MCF 10A (cell line): ENCODE measurements at regions of chr15 and their contacts with region 1.

Region 1: GRCh38 chr15:68875377-68876116 is 54.8 kb upstream of the SPESP1 start:
- DNase-seq: peak; percentile 93
- H3K4me3 Mint-ChIP-seq: peak overlapping the region; percentile 33
- H3K27ac Mint-ChIP-seq: no peak overlapping the region
- H3K4me1 Mint-ChIP-seq: no peaks in the 10 kb centered on the region
- H3K27me3 Mint-ChIP-seq: peaks cover 11% of the 10 kb centered on the region
- CTCF ChIP-seq: peak; percentile 85

Region 2: GRCh38 chr15:68304589-68305337 is 570.8 kb before region 1 on chr15:
- CTCF ChIA-PET with region 1: interaction called, 3 read pairs
- POLR2A ChIA-PET with region 1: no interaction called
- intact Hi-C with region 1: loop called (anchors 1 kb)
- DNase-seq: no peak
- H3K4me3 Mint-ChIP-seq: no peak overlapping the region
- H3K27ac Mint-ChIP-seq: peak overlapping the region; percentile 36
- H3K4me1 Mint-ChIP-seq: peaks cover 19% of the 10 kb centered on the region
- H3K27me3 Mint-ChIP-seq: no peaks in the 10 kb centered on the region
- CTCF ChIP-seq: no peak

Region 3: GRCh38 chr15:68559345-68560310 is 315.9 kb before region 1 on chr15:
- CTCF ChIA-PET with region 1: interaction called, 24 read pairs
- POLR2A ChIA-PET with region 1: interaction called, 4 read pairs
- intact Hi-C with region 1: loop called (anchors 1 kb)
- DNase-seq: peak; percentile 67
- H3K4me3 Mint-ChIP-seq: peak overlapping the region; percentile 70
- H3K27ac Mint-ChIP-seq: no peak overlapping the region
- H3K4me1 Mint-ChIP-seq: peaks cover 6% of the 10 kb centered on the region
- H3K27me3 Mint-ChIP-seq: no peaks in the 10 kb centered on the region
- CTCF ChIP-seq: peak; percentile 94

Region 4: GRCh38 chr15:68739390-68740080 is 136.0 kb before region 1 on chr15:
- CTCF ChIA-PET with region 1: interaction called, 18 read pairs
- POLR2A ChIA-PET with region 1: no interaction called
- intact Hi-C with region 1: no loop called
- DNase-seq: no peak
- H3K4me3 Mint-ChIP-seq: no peak overlapping the region
- H3K27ac Mint-ChIP-seq: no peak overlapping the region
- H3K4me1 Mint-ChIP-seq: no peaks in the 10 kb centered on the region
- H3K27me3 Mint-ChIP-seq: no peaks in the 10 kb centered on the region
- CTCF ChIP-seq: no peak

Region 5: DNA sequence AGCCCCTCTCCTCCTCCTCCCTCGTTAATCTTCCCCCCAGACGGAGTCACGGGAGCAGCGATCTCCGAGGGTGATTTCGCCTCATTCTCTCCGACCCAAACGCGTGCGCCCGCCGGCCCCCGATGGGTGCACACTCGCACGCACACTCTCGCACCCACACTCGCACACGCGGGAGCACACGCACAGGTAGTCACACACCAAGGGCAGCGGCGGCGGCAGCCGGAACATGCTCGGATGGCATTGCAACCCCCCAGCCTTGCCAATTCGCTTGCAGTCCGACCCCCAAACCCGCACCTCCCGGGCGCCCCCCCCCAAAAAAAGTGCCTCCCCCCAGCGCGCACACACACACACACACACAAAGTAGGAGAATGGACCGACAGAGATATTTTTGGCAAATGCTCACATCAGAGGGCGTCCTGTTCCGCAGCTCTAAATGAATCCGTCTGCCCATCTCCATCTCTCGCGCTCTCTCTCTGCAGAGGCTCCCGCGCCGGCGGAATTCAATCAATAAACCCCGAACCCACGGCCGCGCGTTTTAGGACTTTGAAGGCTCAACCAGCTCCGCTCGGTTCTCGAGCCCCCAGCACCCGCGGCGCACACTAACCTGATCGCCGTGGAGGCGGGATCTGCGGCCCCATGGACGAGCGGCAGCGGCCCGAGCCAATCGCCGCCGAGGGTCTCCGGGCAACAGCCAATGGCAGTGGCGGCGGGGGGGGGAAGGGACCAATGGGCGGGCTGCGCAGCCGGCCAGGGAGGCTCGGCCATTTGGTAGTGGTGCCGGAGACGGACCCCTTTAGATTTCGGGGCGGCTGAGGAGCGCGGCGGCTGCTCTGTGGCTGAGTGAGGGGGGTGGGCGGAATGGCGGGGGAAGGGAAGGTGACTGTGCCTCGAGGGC is 55.0 kb before region 1 on chr15 and contains the start of gene ANP32A:
- CTCF ChIA-PET with region 1: interaction called, 4 read pairs
- POLR2A ChIA-PET with region 1: interaction called, 4 read pairs
- intact Hi-C with region 1: loop called (anchors 2 kb)
- DNase-seq: peak; percentile 94
- H3K4me3 Mint-ChIP-seq: peak within 1 kb of the TSS; percentile 96
- H3K27ac Mint-ChIP-seq: peak within 1 kb of the TSS; percentile 96
- H3K4me1 Mint-ChIP-seq: peaks cover 26% of the 10 kb centered on the region
- H3K27me3 Mint-ChIP-seq: no peaks in the 10 kb centered on the region
- CTCF ChIP-seq: no peak
- total RNA-seq, gene ANP32A: 150 and 159 TPM in 2 replicates

Region 6: GRCh38 chr15:69031013-69032001 is 155.8 kb after region 1 on chr15:
- CTCF ChIA-PET with region 1: no interaction called
- POLR2A ChIA-PET with region 1: no interaction called
- intact Hi-C with region 1: no loop called
- DNase-seq: no peak
- H3K4me3 Mint-ChIP-seq: no peak overlapping the region
- H3K27ac Mint-ChIP-seq: no peak overlapping the region
- H3K4me1 Mint-ChIP-seq: peaks cover 5% of the 10 kb centered on the region
- H3K27me3 Mint-ChIP-seq: no peaks in the 10 kb centered on the region
- CTCF ChIP-seq: no peak

Region 7: DNA sequence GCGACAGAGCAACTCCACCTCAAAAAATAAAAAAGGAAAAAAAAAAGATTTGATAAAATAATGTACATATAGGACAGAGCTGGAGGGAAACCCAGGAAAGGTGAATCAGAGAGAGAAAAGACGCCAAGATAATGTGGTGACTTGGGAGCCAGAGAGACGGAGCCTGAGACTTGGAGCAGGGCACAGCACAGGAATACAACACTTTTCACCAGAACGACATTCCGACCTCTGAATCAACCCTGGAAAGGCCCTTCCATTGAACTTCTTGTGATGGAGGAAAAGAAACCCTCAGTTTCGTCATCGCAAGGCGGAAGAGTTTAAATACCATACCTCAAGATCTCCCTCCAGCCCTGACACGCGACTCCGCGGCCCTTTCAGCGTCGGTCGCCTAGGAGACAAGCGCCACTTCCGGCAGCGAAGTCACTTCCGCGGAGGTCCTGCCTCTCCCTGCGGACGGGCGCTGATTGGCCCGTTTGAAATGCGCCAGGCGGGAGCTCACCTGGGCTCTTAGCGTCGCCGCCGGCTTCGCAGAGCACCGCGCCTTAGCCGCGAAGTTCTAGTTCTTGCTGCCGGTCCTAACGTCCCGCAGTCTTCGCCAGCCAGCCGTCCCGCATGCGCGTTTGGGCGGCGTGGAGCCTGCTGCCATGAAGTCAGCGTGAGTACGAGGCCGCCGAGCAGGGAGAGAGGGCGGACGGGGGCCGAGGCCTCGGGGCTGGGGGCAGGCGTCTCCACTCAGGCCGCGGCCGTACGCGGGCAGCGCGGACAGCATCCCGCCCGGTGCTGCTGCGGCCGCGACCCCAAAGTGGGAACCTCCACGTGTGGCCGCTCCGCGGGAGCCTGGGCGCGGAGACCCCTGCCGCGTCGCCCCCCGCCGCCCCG is 538.5 kb after region 1 on chr15 and contains the start of gene KIF23:
- CTCF ChIA-PET with region 1: no interaction called
- POLR2A ChIA-PET with region 1: no interaction called
- intact Hi-C with region 1: loop called (anchors 5 kb)
- DNase-seq: peak; percentile 95
- H3K4me3 Mint-ChIP-seq: peak within 1 kb of the TSS; percentile 80
- H3K27ac Mint-ChIP-seq: peak within 1 kb of the TSS; percentile 88
- H3K4me1 Mint-ChIP-seq: peaks cover 13% of the 10 kb centered on the region
- H3K27me3 Mint-ChIP-seq: no peaks in the 10 kb centered on the region
- CTCF ChIP-seq: no peak
- total RNA-seq, gene KIF23: 30.3 and 50.2 TPM in 2 replicates